Activated naive CD4-positive, alpha-beta T cell treated with anti-CD3 and anti-CD28 coated beads for 36 hours (primary cell): ENCODE measurements at regions of chr13 and their contacts with region 1.

Region 1: GRCh38 chr13:101144808-101145419 is 271.4 kb downstream of the NALCN start:
- DNase-seq: peak; percentile 28
- H3K4me3 Mint-ChIP-seq: no peak overlapping the region
- H3K27ac Mint-ChIP-seq: no peak overlapping the region
- H3K4me1 Mint-ChIP-seq: no peaks in the 10 kb centered on the region
- H3K27me3 Mint-ChIP-seq: peaks cover 35% of the 10 kb centered on the region

Region 2: GRCh38 chr13:101298517-101298916 is 153.6 kb after region 1 on chr13:
- CTCF ChIA-PET with region 1: interaction called, 5 read pairs
- intact Hi-C with region 1: loop called (anchors 1 kb)
- DNase-seq: no peak
- H3K4me3 Mint-ChIP-seq: no peak overlapping the region
- H3K27ac Mint-ChIP-seq: no peak overlapping the region
- H3K4me1 Mint-ChIP-seq: no peaks in the 10 kb centered on the region
- H3K27me3 Mint-ChIP-seq: peaks cover 3% of the 10 kb centered on the region

Region 3: DNA sequence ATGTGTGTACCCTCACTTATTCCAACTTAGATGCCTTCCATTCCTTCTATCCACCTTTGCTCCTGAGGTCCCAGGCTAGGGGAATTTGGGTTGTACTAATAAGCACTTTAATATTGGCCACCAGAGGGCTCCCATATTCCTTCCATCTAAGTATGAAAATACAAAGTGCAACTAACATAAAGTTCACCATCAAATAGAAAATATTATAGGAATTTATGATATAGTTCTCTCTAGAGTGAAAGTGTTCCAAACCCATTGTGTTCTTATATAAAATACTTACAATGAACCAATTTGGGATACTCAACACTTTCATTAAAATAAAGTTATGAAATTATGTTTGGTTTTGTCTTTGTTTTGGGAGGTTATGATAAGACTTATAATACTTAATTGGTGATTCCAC is 369.9 kb after region 1 on chr13:
- CTCF ChIA-PET with region 1: interaction called, 7 read pairs
- intact Hi-C with region 1: loop called (anchors 2 kb)
- DNase-seq: peak; percentile 29
- H3K4me3 Mint-ChIP-seq: no peak overlapping the region
- H3K27ac Mint-ChIP-seq: no peak overlapping the region
- H3K4me1 Mint-ChIP-seq: peaks cover 2% of the 10 kb centered on the region
- H3K27me3 Mint-ChIP-seq: peaks cover 4% of the 10 kb centered on the region

Region 4: GRCh38 chr13:101942038-101942437 is 797.1 kb after region 1 on chr13:
- CTCF ChIA-PET with region 1: no interaction called
- intact Hi-C with region 1: loop called (anchors 2 kb)
- DNase-seq: peak; percentile 26
- H3K4me3 Mint-ChIP-seq: no peak overlapping the region
- H3K27ac Mint-ChIP-seq: no peak overlapping the region
- H3K4me1 Mint-ChIP-seq: no peaks in the 10 kb centered on the region
- H3K27me3 Mint-ChIP-seq: peaks cover 2% of the 10 kb centered on the region